Right ventricle myocardium inferior (tissue), 1 donor: ENCODE measurements at regions of chr10 and their contacts with region 1.

Region 1: GRCh38 chr10:6202684-6203330 is at the start of gene PFKFB3:
- DNase-seq: peak; percentile 98
- ATAC-seq: peak; percentile 95
- total RNA-seq, gene PFKFB3: 28.1 TPM

Region 2: GRCh38 chr10:6114805-6115341 is 87.9 kb before region 1 on chr10:
- intact Hi-C with region 1: loop called (anchors 2 kb)
- DNase-seq: no peak
- ATAC-seq: no peak

Region 3: DNA sequence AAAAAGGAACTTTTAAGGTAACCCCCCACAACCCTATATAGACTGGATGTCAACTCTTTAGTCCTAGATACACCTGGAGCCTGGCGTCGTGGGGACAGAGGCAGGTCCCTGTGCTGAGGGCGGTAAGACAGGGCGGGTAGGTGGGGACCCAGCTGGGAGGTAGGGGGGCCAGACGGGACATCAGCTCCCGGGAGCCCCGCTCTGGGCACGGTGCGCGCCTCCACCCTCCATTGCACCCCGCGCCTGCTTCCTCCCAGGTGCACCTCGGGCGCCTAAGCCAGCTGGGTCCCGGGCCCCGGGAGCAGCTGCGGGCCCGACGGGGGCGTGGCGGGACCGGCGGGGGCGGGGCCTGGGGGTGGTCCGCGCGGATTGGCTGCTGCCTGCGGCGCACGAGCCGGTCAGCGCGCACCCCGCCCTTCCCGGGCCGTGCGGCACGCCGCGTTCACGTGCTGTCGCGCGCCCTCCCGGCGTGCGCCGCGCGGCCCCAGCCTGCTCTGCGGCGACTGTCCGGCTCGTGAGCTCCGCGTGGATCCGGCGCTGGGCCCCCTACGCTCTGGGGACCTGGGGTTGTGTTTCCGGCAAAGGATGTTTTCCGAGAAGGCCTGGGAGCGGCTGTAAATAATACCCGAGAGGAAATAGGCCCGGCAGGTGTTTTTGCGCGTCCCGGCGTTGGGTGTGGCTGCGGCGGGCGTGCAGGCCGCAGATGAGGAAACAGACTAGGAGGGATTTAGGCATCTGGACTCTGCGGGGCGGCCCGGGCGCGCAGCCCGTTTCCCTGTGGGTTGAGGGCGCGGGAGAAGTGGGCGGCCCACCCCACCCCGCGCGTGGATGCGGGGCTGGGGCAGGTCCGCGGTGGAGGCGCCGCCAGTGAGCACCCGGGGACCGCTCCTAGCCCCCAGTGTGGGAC is 39.2 kb before region 1 on chr10:
- intact Hi-C with region 1: loop called (anchors 1 kb)
- DNase-seq: peak; percentile 95
- ATAC-seq: peak; percentile 99

Region 4: GRCh38 chr10:6175329-6176055 is 27.3 kb before region 1 on chr10:
- intact Hi-C with region 1: loop called (anchors 2 kb)
- DNase-seq: no peak
- ATAC-seq: no peak

Region 5: GRCh38 chr10:6401562-6402348 is 198.9 kb after region 1 on chr10:
- intact Hi-C with region 1: loop called (anchors 2 kb)
- DNase-seq: peak; percentile 82
- ATAC-seq: peak; percentile 96